Posterior vena cava (tissue), 2 donors: ENCODE measurements at regions of chr18 and their contacts with region 1.

Region 1: GRCh38 chr18:47615043-47615442 is 315.4 kb downstream of the SMAD2 start:
- DNase-seq: no peak

Region 2: DNA sequence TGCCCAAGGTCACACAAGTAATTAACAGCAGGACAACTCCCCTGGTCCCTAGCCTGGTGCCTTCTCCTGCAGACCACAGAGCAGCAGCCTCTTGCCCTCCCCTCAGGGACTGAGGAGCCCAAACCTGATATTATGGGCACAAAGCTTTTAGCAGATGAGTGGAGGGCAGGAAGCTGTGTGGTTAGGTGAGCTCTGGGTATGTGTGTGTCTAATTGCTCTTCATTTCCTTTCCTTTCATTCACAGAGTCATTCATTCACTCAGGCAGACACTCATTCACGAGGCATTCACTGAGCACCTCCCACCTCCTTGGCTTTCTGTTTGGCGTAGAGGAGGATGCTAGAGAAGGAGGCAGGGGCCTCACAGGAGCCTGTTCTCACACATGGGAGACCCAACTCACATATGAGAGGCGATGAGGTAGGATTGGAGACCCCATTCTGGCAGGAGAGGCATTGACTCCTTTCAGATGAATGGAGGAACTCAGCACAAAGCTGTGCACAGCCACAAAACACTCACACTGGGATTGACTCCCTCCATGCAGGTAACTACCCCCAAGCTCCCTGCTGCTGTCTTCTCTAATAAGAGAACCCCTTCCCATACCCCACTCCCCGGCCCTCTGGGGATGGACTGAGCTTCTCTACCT is 56.8 kb before region 1 on chr18:
- intact Hi-C with region 1: loop called in 1 of 2 experiments (anchors 1 kb)
- DNase-seq: no peak

Region 3: GRCh38 chr18:47644896-47645295 is 29.9 kb after region 1 on chr18:
- intact Hi-C with region 1: no loop called
- DNase-seq: no peak

Region 4: GRCh38 chr18:47669815-47670214 is 54.8 kb after region 1 on chr18:
- intact Hi-C with region 1: no loop called
- DNase-seq: no peak